ENCODE measurements at regions of chr7 and their contacts with region 1.

Region 1: DNA sequence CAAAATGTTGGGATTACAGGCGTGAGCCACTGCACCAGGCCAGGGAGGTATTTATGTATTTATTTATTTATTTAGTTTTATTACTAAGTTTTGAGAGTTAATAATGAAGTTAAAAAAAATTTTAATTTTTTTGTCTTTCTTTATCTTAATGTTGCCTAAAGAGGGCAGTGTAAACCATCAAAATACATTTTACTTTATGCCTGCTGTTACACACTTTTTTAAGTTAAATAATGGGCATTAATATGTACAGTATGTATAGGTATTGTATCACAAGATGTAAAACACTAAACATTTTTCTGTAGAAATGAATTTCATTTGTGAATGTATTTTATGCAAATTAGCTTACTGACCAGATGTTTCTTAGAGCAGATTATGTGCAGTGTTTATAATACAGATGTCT is 129.4 kb downstream of the AASS start:
- DNase-seq: no peak
- H3K4me3 ChIP-seq: no peak overlapping the region
- H3K27ac ChIP-seq: no peak overlapping the region
- H3K4me1 ChIP-seq: no peaks in the 10 kb centered on the region
- H3K27me3 ChIP-seq: no peaks in the 10 kb centered on the region
- CTCF ChIP-seq: peak; percentile 43; the same call in 1 of the 2 replicates

Region 2: GRCh38 chr7:122143751-122144711 is 129.3 kb after region 1 on chr7 and contains the start of gene AASS:
- CTCF ChIA-PET with region 1: no interaction called
- POLR2A ChIA-PET with region 1: no interaction called
- intact Hi-C with region 1: loop called (anchors 5 kb)
- DNase-seq: peak; percentile 98
- H3K4me3 ChIP-seq: peak within 1 kb of the TSS; percentile 82
- H3K27ac ChIP-seq: peak within 1 kb of the TSS; percentile 89
- H3K4me1 ChIP-seq: peaks cover 29% of the 10 kb centered on the region
- H3K27me3 ChIP-seq: no peaks in the 10 kb centered on the region
- CTCF ChIP-seq: no peak
- total RNA-seq, gene AASS: 38.8 and 44.4 TPM in 2 replicates

Region 3: GRCh38 chr7:122528879-122529481 is 514.3 kb after region 1 on chr7:
- CTCF ChIA-PET with region 1: no interaction called
- POLR2A ChIA-PET with region 1: no interaction called
- intact Hi-C with region 1: loop called (anchors 10 kb)
- DNase-seq: peak; percentile 70
- H3K4me3 ChIP-seq: no peak overlapping the region
- H3K27ac ChIP-seq: no peak overlapping the region
- H3K4me1 ChIP-seq: peaks cover 23% of the 10 kb centered on the region
- H3K27me3 ChIP-seq: no peaks in the 10 kb centered on the region
- CTCF ChIP-seq: peak; percentile 67